ENCODE measurements at regions of chr4 and their contacts with region 1.

Region 1: DNA sequence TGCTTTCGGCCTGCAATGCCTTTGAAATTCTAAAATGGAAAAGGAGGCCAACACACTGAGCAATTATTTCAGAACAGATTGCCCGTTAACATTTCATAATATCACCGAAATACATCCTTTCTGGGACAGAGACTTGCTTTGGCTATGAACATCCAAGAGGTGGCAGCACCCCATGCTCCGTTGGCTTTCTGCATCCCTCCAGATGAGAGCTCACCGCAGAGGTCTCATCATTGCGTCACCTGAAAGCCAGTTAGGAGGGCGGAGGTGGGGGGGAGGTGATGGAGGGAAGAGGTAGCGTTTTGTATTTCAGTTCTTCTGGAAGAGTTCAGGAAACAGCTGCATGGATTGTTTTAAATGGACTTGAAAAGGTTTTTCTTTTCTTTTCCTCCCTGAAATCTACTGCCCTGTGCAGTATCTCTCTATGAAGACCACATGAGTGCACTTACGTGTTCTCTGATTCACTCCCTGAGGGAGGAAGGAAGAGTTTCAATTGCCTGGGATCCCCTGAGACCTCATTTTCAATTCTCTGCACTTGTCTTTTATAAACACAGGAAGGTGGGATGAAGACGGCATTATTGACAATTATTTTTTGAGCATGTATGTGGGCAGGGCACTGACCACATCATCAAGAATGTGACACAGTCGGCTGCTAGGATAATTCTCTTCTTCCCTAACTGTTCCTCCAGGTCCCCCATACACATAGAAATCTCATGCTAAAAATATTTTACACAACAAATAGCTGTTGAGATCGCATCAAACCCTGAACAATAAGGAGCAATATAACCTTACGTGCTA is 166.9 kb upstream of the PGRMC2 start:
- DNase-seq: peak; percentile 67 to 78
- H3K4me3 ChIP-seq: no peak overlapping the region
- H3K27ac ChIP-seq: no peak overlapping the region
- H3K4me1 ChIP-seq: peaks cover 4% of the 10 kb centered on the region; the same call in 1 of the 2 replicates
- H3K27me3 ChIP-seq: no peaks in the 10 kb centered on the region
- CTCF ChIP-seq: peak; percentile 85

Region 2: GRCh38 chr4:128386761-128387599 is 67.5 kb before region 1 on chr4:
- CTCF ChIA-PET with region 1: no interaction called
- POLR2A ChIA-PET with region 1: no interaction called
- intact Hi-C with region 1: loop called (anchors 2 kb)
- DNase-seq: peak; percentile 77 to 87
- H3K4me3 ChIP-seq: no peak overlapping the region
- H3K27ac ChIP-seq: peak overlapping the region; percentile 63
- H3K4me1 ChIP-seq: peaks cover 33% of the 10 kb centered on the region
- H3K27me3 ChIP-seq: no peaks in the 10 kb centered on the region
- CTCF ChIP-seq: no peak

Region 3: DNA sequence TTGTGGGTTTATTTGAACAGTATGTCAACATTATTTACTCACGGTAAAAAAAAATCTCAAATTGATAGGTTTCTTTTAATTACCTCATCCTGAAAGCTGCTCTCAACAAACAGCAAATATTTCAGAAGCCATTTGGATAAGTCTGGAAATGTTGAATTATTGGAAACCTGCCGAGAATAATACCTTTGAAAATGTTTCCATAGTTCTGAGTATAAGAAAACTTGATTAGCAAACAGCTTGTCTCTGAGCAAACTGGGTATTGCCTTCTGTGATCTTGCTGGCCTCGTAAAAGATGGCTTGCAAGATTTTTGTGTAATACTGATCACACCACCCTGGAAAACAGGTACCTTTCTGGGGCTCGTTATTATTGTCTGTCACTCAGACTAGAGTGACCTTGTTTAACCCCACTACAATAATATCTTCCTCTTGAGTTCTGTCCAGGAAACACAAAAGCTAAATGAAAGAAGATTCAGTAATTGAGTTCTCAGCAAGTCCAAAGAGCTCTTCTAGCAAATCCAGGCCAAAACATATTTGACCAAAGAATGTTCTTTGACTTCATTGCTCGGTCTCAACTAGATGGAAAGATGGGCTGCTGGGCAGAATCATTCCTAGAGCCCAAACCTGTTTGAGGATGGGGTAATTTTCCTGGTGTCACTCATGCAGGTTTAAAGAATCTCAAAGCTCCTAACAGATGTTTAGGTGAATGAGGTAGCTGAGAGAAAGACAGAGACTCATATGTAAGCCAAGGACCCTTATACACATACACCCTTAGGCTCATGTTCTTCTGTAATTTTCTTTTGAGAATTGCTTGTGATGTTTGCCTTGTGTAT is 99.4 kb after region 1 on chr4:
- CTCF ChIA-PET with region 1: interaction called, 9 read pairs
- POLR2A ChIA-PET with region 1: no interaction called
- intact Hi-C with region 1: loop called (anchors 1 kb)
- DNase-seq: peak in 1 of 2 experiments; percentile 57
- H3K4me3 ChIP-seq: peak overlapping the region; percentile 64
- H3K27ac ChIP-seq: peak overlapping the region; percentile 81
- H3K4me1 ChIP-seq: peaks cover 16% of the 10 kb centered on the region
- H3K27me3 ChIP-seq: no peaks in the 10 kb centered on the region
- CTCF ChIP-seq: no peak

Region 4: DNA sequence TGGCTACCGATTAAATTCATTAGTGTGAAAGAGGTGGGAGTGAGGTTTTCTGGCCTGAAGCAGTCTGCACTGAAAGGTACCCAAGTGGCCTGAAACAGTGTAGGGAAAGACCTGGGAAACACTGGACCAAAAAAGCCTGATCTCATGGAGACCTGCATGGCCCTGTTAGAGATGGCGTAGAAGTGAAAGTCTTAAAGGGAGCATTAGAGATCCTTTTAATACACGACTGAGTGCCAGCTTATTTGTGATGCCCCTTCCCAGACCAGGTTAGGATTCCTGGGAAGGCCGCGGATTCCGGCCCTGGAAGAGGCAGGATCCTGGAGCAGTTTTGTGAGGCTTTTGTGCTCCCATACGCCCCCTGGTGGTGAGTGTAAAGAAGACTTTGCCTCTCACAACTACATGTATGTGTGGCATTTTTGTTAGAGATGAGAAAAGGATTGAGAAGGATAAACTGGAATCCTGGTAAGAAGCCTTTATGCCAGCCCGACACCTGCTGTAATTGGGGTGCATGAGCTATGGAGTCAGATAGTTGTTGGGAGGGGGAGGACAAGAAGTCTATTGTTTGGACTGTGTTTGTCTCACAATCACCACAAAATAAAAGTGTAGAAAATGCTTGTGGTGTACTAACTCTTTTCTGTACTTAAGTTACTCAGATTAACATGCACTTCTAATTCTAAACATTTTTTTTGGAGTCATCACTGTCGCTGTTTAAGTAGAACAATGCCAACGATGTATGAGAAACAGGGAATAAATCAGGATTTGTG is 409.0 kb after region 1 on chr4:
- CTCF ChIA-PET with region 1: interaction called, 3 read pairs
- POLR2A ChIA-PET with region 1: no interaction called
- intact Hi-C with region 1: loop called (anchors 1 kb)
- DNase-seq: peak in 1 of 2 experiments; percentile 59
- H3K4me3 ChIP-seq: no peak overlapping the region
- H3K27ac ChIP-seq: no peak overlapping the region
- H3K4me1 ChIP-seq: no peaks in the 10 kb centered on the region
- H3K27me3 ChIP-seq: no peaks in the 10 kb centered on the region
- CTCF ChIP-seq: peak; percentile 86

Region 5: DNA sequence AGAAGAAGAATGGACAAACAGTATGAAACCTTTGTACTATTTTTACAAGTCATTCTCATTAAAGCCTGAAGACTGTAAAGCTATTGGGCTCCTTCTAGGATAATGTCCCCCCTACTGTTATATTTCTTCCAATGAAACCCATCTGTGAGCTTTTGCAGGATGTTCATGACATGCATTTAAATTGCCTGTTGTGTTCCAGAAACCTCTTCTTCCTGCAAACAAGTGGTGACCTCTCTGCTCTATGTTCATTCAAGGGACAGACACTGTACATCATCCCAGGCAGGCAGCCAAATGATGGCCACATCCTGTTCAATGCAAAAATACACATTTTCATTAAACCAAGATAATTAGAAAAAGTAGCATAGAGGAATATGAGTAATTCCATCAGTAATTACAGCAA is 769.5 kb after region 1 on chr4:
- CTCF ChIA-PET with region 1: no interaction called
- POLR2A ChIA-PET with region 1: no interaction called
- intact Hi-C with region 1: no loop called
- DNase-seq: no peak
- H3K4me3 ChIP-seq: no peak overlapping the region
- H3K27ac ChIP-seq: no peak overlapping the region
- H3K4me1 ChIP-seq: no peaks in the 10 kb centered on the region
- H3K27me3 ChIP-seq: no peaks in the 10 kb centered on the region
- CTCF ChIP-seq: no peak